ENCODE measurements at regions of chr11 and their contacts with region 1.

Region 1: GRCh38 chr11:5767056-5767455 is 13.0 kb downstream of the OR52N4 start:
- DNase-seq: no peak

Region 2: DNA sequence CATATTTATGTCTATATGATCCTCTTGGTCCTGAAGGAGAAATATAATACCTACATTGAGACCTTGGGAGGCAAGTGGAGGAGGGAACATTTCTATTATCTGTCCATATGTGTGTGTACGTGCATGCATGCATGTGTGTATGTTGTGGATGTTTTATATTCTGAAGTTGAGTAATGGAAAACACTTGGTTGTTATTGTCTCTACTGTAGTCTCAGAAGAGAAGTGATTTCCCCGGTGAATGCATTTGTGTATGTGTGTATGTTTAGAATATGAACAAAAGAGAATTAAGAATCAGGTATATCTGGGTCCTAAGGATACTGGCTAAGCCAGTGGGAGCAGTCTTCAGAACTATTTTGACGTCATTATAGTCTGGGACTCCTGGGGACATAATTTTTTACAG is 24.1 kb after region 1 on chr11 and contains the start of gene OR52N1:
- intact Hi-C with region 1: loop called in 1 of 2 experiments (anchors 2 kb)
- DNase-seq: no peak
- total RNA-seq, gene OR52N1: not detected

Measured in posterior vena cava (tissue), 2 donors.